Right ventricle myocardium inferior (tissue), 1 donor: ENCODE measurements at regions of chr12 and their contacts with region 1.

Region 1: GRCh38 chr12:120580787-120581723 is at the start of gene POP5:
- DNase-seq: peak; percentile 98
- ATAC-seq: peak; percentile 95
- total RNA-seq, gene POP5: 39.3 TPM

Region 2: GRCh38 chr12:120528861-120529525 is 52.1 kb before region 1 on chr12 and contains the start of gene COQ5:
- intact Hi-C with region 1: loop called (anchors 2 kb)
- DNase-seq: peak; percentile 97
- ATAC-seq: peak; percentile 94
- total RNA-seq, gene COQ5: 42.9 TPM

Region 3: GRCh38 chr12:120649442-120650232 is 68.6 kb after region 1 on chr12:
- intact Hi-C with region 1: loop called (anchors 2 kb)
- DNase-seq: no peak
- ATAC-seq: no peak

Region 4: DNA sequence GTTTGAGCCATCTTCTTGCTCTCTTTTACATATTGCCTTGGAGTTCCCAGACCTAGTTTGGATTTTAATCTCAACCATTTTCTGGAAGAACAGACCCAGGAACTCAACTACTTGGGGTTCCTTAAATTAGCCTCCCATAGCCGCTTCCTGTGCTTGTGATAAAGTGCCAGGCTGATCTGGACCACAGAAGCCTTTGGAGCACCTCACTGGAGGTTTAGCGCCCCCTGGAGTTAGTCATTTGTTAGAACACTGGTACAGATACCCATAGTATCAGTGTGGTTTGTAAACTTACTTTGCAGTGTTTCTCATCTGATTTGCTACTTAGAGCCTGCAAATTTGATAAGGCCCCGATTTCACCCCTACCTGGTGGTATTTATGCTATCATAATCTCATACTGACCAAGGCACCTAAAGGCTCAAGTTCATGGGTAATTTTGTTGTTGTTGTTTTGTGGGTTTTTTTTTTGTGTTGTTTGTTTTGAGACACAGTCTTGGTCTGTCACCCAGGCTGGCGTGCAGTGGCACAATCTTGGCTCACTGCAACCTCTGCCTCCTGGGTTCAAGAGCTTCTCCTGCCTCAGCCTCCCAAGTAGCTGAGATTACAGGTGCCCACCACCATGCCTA is 132.9 kb after region 1 on chr12:
- intact Hi-C with region 1: loop called (anchors 1 kb)
- DNase-seq: no peak
- ATAC-seq: peak; percentile 69

Region 5: GRCh38 chr12:120971299-120972179 is 390.5 kb after region 1 on chr12:
- intact Hi-C with region 1: loop called (anchors 2 kb)
- DNase-seq: no peak
- ATAC-seq: peak; percentile 72

Region 6: GRCh38 chr12:121095544-121096198 is 514.6 kb after region 1 on chr12:
- intact Hi-C with region 1: loop called (anchors 5 kb)
- DNase-seq: peak; percentile 89
- ATAC-seq: peak; percentile 88